Activated naive CD4-positive, alpha-beta T cell treated with anti-CD3 and anti-CD28 coated beads for 36 hours (primary cell): ENCODE measurements at regions of chr2 and their contacts with region 1.

Region 1: GRCh38 chr2:131154071-131154531 is 49.0 kb downstream of the PLEKHB2 start:
- DNase-seq: peak; percentile 93
- H3K4me3 Mint-ChIP-seq: no peak overlapping the region
- H3K27ac Mint-ChIP-seq: no peak overlapping the region
- H3K4me1 Mint-ChIP-seq: peaks cover 22% of the 10 kb centered on the region
- H3K27me3 Mint-ChIP-seq: no peaks in the 10 kb centered on the region

Region 2: GRCh38 chr2:131067488-131068125 is 86.5 kb before region 1 on chr2:
- CTCF ChIA-PET with region 1: no interaction called
- intact Hi-C with region 1: no loop called
- DNase-seq: no peak
- H3K4me3 Mint-ChIP-seq: no peak overlapping the region
- H3K27ac Mint-ChIP-seq: no peak overlapping the region
- H3K4me1 Mint-ChIP-seq: peaks cover 28% of the 10 kb centered on the region
- H3K27me3 Mint-ChIP-seq: no peaks in the 10 kb centered on the region

Region 3: GRCh38 chr2:131093006-131093695 is 61.0 kb before region 1 on chr2 and contains the start of gene FAM168B:
- CTCF ChIA-PET with region 1: no interaction called
- intact Hi-C with region 1: loop called (anchors 2 kb)
- DNase-seq: peak; percentile 86
- H3K4me3 Mint-ChIP-seq: peak within 1 kb of the TSS; percentile 85
- H3K27ac Mint-ChIP-seq: peak within 1 kb of the TSS; percentile 92
- H3K4me1 Mint-ChIP-seq: peaks cover 20% of the 10 kb centered on the region
- H3K27me3 Mint-ChIP-seq: no peaks in the 10 kb centered on the region
- total RNA-seq, gene FAM168B: 52.7 to 55.0 TPM

Region 4: DNA sequence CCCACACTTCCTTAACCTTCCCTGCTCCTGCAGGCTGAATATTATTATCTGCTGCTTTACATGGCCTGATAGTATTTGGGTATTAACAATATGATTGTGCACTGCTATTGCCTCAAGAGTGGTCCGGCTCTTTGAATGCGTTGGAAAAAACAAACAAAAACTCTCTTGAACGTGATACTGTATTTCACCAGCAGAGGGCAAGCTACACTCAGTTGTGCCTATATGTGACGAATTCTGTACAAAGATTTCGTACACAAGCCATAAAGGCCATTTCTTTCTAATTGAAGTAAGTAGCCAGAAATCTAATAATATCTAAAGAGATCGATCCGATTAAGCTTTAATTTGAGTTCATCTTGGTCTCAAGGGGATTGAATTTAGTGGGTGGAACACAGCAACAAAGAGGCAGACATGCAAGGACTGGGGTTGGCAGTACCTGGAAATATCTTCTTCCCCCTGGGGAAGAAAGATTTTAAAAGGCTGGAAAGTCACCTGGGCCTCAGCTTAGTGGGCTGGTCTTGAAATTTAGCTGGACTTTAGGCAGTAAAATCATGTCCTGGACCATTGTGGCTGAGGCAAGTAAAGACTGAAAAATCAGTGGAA is 259.1 kb after region 1 on chr2:
- CTCF ChIA-PET with region 1: interaction called, 13 read pairs
- intact Hi-C with region 1: loop called (anchors 1 kb)
- DNase-seq: peak; percentile 49
- H3K4me3 Mint-ChIP-seq: no peak overlapping the region
- H3K27ac Mint-ChIP-seq: no peak overlapping the region
- H3K4me1 Mint-ChIP-seq: no peaks in the 10 kb centered on the region
- H3K27me3 Mint-ChIP-seq: peaks cover 23% of the 10 kb centered on the region

Region 5: GRCh38 chr2:131543371-131543891 is 389.3 kb after region 1 on chr2:
- CTCF ChIA-PET with region 1: no interaction called
- intact Hi-C with region 1: loop called (anchors 5 kb)
- DNase-seq: no peak
- H3K4me3 Mint-ChIP-seq: no peak overlapping the region
- H3K27ac Mint-ChIP-seq: no peak overlapping the region
- H3K4me1 Mint-ChIP-seq: no peaks in the 10 kb centered on the region
- H3K27me3 Mint-ChIP-seq: no peaks in the 10 kb centered on the region

Region 6: GRCh38 chr2:131801210-131801744 is 647.2 kb after region 1 on chr2:
- CTCF ChIA-PET with region 1: interaction called, 3 read pairs
- intact Hi-C with region 1: loop called (anchors 1 kb)
- DNase-seq: no peak
- H3K4me3 Mint-ChIP-seq: no peak overlapping the region
- H3K27ac Mint-ChIP-seq: no peak overlapping the region
- H3K4me1 Mint-ChIP-seq: no peaks in the 10 kb centered on the region
- H3K27me3 Mint-ChIP-seq: peaks cover 3% of the 10 kb centered on the region